Dorsolateral prefrontal cortex (tissue), 120 donors: ENCODE measurements at regions of chr5 and their contacts with region 1.

Region 1: DNA sequence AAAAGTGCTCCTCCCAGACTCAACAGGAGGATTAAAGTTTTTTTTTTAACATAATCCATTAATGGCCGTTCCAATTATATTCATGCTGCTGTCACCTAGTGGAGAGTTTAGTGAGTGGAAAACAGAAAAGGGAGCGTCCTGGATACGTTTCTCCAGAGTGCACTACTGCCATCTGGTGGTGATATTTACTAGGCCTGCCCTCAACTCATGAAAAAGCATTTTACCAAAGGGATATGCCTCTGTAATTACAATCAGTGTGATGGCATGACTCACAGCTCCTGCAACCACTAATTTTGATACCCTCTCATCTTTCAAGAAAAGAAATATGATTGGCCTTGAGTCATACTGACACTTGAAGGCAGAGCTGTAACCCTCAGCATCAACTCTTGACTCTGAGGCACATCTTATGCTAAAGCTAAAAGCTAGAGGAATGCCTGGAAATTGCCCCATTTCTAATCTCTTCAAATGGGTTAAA is 20.0 kb downstream of the MINAR2 start:
- DNase-seq: peak in 8 of 10 donors; percentile 39 to 84 (median 58)
- H3K4me3 ChIP-seq: no peak overlapping the region
- H3K27ac ChIP-seq: no peak overlapping the region
- H3K27me3 ChIP-seq: no peaks in the 10 kb centered on the region
- CTCF ChIP-seq: peak; percentile 98 to 100 (median 100)

Region 2: DNA sequence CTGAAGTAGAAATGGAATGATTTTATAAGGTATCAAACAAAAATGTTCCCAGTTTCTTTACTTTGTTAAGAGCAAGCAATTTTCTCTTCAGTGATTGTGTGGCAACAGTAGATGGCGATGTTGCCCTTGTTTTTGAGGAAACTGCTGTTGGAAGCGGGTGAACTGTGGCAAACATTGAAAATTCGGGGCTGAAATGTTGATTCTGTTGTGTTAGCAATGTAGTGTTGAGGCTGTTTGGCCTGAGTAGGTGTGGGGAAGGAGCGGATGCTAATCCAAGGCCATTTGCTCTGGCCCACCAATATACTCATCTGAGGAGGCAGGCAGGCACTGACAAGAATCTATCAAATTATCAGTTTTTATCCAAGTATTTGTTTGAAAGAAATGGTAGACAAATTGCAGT is 1554.6 kb before region 1 on chr5:
- intact Hi-C with region 1: loop called in 1 of 2 experiments (anchors 10 kb)
- DNase-seq: peak in 6 of 10 donors; percentile 28 to 67 (median 45)
- H3K4me3 ChIP-seq: no peak overlapping the region
- H3K27ac ChIP-seq: no peak overlapping the region
- H3K27me3 ChIP-seq: no peaks in the 10 kb centered on the region
- CTCF ChIP-seq: peak; percentile 50 to 95 (median 85)

Region 3: DNA sequence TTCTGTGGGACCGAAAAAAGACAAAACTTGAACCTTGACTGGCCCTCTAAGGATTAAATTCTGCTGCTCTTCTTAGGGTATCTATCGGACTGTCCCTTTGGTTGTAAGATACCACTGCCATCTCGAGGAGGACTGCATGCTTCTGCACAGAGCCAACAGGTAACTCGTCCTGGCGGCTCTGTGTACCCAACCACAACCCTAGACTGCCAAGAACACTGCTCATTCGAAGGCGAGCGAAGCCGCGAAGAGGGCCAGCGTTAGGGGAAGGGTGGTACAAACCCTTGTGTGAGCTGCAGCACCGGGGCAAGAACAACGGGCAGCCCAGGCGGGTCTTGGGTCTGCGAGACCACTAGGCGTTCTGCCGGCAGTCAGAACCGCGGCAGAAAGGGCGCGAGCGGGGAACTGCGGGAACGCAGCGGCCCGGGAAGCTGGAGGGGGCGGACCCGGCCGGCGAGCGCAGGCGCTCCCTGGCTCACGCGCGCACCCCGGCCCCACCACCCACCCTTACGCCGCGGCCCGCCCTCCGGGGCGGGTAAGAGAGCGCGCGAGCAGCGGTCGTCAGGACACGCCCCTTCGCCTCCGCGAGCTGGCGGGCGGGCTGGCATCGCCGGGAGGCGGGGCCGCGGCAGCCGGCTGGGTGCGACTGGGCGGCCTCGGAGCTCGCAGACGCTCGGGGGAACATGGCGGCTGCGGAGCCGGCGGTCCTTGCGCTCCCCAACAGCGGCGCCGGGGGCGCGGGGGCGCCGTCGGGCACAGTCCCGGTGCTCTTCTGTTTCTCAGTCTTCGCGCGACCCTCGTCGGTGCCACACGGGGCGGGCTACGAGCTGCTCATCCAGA is 673.6 kb before region 1 on chr5 and contains the start of gene ISOC1:
- intact Hi-C with region 1: loop called in 1 of 2 experiments (anchors 10 kb)
- DNase-seq: peak; percentile 47 to 93 (median 83)
- H3K4me3 ChIP-seq: peak within 1 kb of the TSS; percentile 62 to 99 (median 86)
- H3K27ac ChIP-seq: peak within 1 kb of the TSS in 56 of 59 donors; percentile 24 to 91 (median 79)
- H3K27me3 ChIP-seq: no peaks in the 10 kb centered on the region
- CTCF ChIP-seq: peak in 29 of 56 donors; percentile 3 to 62 (median 24)
- total RNA-seq, gene ISOC1: 5.2 to 18.9 (median 12.0) TPM

Region 4: DNA sequence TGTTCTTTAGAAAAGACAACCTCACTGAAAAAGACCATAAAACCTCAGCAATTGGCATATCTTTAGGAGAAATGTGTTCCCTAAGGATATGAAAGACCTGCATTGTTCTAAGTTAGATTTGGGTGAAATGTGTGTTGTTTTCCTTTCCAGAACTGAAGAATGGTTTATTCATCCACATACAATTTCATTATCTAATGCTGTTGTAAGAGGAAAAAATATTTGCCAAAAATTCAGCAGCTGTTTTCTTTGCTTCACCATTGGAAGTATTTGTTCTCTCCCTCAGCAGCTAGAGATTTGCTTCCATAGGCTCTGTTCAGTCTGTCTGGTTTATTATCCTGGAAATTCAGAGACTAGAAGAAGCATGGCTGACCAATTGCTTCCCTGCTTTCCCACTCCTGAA is 522.5 kb before region 1 on chr5:
- intact Hi-C with region 1: loop called in 1 of 2 experiments (anchors 10 kb)
- DNase-seq: no peak
- H3K4me3 ChIP-seq: peak overlapping the region in 3 of 59 donors; percentile 2 to 22 (median 16)
- H3K27ac ChIP-seq: peak overlapping the region; percentile 60 to 97 (median 91)
- H3K27me3 ChIP-seq: no peaks in the 10 kb centered on the region
- CTCF ChIP-seq: peak in 8 of 56 donors; percentile 6 to 30 (median 21)

Region 5: GRCh38 chr5:129852747-129853352 is 84.9 kb after region 1 on chr5:
- intact Hi-C with region 1: loop called (anchors 2 to 5 kb)
- DNase-seq: peak; percentile 33 to 85 (median 72)
- H3K4me3 ChIP-seq: no peak overlapping the region
- H3K27ac ChIP-seq: no peak overlapping the region
- H3K27me3 ChIP-seq: no peaks in the 10 kb centered on the region
- CTCF ChIP-seq: peak; percentile 69 to 97 (median 90)

Region 6: GRCh38 chr5:130011986-130012385 is 244.0 kb after region 1 on chr5:
- intact Hi-C with region 1: no loop called
- DNase-seq: no peak
- H3K4me3 ChIP-seq: no peak overlapping the region
- H3K27ac ChIP-seq: no peak overlapping the region
- H3K27me3 ChIP-seq: no peaks in the 10 kb centered on the region
- CTCF ChIP-seq: no peak